ENCODE measurements at regions of chr7 and their contacts with region 1.

Region 1: GRCh38 chr7:118232837-118233236 is 8.3 kb downstream of the ANKRD7 start:
- DNase-seq: no peak
- H3K4me3 ChIP-seq: no peak overlapping the region
- H3K27ac ChIP-seq: no peak overlapping the region
- H3K4me1 ChIP-seq: no peaks in the 10 kb centered on the region
- H3K27me3 ChIP-seq: no peaks in the 10 kb centered on the region
- CTCF ChIP-seq: no peak

Region 2: GRCh38 chr7:118264836-118265235 is 32.0 kb after region 1 on chr7:
- intact Hi-C with region 1: loop called (anchors 5 kb)
- DNase-seq: no peak
- H3K4me3 ChIP-seq: no peak overlapping the region
- H3K27ac ChIP-seq: no peak overlapping the region
- H3K4me1 ChIP-seq: no peaks in the 10 kb centered on the region
- H3K27me3 ChIP-seq: no peaks in the 10 kb centered on the region
- CTCF ChIP-seq: no peak

Measured in ascending aorta (tissue), 2 donors.